ENCODE measurements at regions of chr6 and their contacts with region 1.

Region 1: DNA sequence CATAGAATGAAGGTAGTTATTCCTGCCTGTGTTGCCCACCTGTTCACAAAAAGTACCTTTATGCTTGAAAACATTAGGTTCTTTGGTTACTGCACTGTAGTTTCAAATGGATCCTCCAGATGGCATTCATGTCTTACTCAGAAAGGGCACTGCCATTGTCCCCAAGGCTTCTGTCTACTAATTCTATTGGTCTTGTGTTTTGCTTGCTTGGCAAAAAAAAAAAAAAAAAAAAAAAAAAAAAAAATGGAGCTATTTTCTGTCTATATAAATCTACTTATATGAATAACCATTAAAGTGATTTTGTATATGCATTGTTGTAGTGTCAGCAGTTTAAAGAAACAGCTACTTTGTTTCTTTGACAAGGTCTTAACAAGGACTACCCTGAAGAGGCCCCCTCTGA is 12.7 kb upstream of the EFHC1 start:
- DNase-seq: no peak
- H3K4me3 ChIP-seq: no peak overlapping the region
- H3K27ac ChIP-seq: no peak overlapping the region
- H3K27me3 ChIP-seq: no peaks in the 10 kb centered on the region
- CTCF ChIP-seq: peak; percentile 58

Region 2: DNA sequence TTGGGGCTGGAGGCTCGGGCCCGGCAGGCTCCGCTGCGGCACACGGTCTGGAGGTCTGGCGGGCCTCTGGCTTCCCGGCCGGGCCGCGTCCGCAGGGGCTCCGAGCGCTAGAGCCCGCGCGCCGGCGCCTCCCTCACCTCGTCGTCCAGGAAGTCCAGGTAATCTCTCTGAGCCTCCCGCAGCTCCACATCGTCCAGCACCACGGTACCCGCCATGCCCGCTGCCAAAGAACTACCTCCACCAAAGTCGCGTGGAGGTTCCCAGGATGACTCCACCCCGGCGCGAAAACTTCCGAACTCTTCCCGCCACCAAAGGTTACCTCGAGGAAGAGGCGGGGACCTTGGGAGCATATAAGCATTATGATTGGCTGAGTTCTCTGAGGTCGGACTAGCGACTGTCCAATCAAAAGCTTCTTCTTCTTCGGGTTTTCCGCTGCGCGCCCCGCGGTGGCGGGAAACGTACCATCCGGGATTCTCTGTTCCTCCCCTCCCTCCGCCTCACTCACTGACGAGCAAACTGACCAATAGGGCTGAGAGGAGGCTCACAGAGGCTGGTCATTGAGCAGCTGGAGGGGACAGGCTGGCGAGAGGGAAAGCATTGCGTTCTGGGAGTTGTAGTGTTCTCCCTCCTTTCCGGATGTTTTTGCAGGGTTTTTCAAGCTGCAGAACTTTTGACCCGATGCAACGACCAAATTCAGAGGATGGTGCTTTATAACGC is 122.8 kb before region 1 on chr6 and contains the start of gene MCM3:
- CTCF ChIA-PET with region 1: interaction called, 214 read pairs
- POLR2A ChIA-PET with region 1: no interaction called
- DNase-seq: peak; percentile 98
- H3K4me3 ChIP-seq: peak within 1 kb of the TSS; percentile 83
- H3K27ac ChIP-seq: no peak within 1 kb of the TSS
- H3K27me3 ChIP-seq: no peaks in the 10 kb centered on the region
- CTCF ChIP-seq: no peak
- polyA plus RNA-seq, gene MCM3: 28.4 and 33.6 TPM in 2 replicates

Region 3: GRCh38 chr6:52551401-52552277 is 144.2 kb after region 1 on chr6:
- CTCF ChIA-PET with region 1: interaction called, 10 read pairs
- POLR2A ChIA-PET with region 1: no interaction called
- DNase-seq: peak; percentile 87
- H3K4me3 ChIP-seq: peak overlapping the region; percentile 22; the same call in 1 of the 2 replicates
- H3K27ac ChIP-seq: peak overlapping the region; percentile 98
- H3K27me3 ChIP-seq: no peaks in the 10 kb centered on the region
- CTCF ChIP-seq: peak; percentile 5; the same call in 1 of the 2 replicates

Region 4: DNA sequence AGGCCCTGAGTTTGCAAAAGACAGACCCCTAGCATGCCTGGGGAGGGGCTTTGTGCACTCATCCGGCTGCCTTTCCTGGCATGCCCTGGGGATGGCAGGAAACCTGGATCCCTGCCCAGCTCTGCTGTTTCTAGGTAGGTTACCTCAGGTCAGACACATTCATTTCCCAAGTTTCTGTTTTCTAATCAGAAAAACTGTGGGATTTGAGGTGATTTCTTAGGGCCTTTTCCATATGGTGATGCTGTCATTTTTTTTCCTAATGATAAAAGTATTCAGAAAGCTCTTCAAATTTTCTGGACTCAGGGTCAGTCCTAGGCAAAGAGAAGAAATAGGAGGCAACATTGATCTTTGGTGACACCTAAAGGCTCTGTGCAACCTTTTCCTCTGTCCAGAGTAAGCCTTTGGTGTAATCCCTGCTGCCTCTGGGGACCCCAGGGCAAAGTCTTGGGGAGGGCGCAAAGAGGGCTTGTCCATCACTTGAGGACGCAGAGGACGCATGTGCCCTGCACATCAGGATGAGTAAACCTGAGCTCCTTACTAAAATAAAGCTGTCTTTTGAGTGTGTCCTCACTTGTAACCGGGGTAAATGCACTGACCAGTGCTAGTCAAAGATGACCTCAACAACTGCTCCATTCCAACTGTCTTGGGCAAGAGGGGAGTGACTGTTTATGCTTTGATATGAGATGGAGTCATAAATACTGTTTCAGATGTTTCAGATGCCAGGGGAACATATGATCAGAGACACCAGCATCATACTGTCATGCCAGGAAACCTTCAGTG is 182.9 kb after region 1 on chr6:
- CTCF ChIA-PET with region 1: interaction called, 21 read pairs
- POLR2A ChIA-PET with region 1: no interaction called
- DNase-seq: no peak
- H3K4me3 ChIP-seq: no peak overlapping the region
- H3K27ac ChIP-seq: peak overlapping the region; percentile 41
- H3K27me3 ChIP-seq: no peaks in the 10 kb centered on the region
- CTCF ChIP-seq: no peak

Region 5: GRCh38 chr6:52640170-52640569 is 232.7 kb after region 1 on chr6:
- CTCF ChIA-PET with region 1: interaction called, 10 read pairs
- POLR2A ChIA-PET with region 1: no interaction called
- DNase-seq: no peak
- H3K4me3 ChIP-seq: no peak overlapping the region
- H3K27ac ChIP-seq: no peak overlapping the region
- H3K27me3 ChIP-seq: no peaks in the 10 kb centered on the region
- CTCF ChIP-seq: no peak

Region 6: DNA sequence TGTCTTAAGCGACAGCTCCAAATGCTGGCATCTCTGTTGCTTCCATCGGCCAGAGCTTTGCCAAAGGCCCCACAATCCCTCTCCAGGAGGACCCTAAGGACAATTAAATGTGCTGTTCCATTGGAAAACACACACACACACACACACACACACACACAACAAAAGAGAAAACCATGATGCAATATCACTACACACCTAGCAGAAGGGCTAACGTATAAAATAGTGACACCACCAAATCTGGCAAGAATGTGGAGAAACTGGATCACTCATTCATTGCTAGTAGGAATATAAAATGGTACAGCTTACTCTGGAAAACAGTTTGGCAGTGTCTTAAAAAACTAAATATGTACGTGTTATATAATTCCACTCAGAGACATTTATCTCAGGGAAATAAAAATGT is 250.4 kb after region 1 on chr6:
- CTCF ChIA-PET with region 1: interaction called, 89 read pairs
- POLR2A ChIA-PET with region 1: no interaction called
- DNase-seq: no peak
- H3K4me3 ChIP-seq: no peak overlapping the region
- H3K27ac ChIP-seq: no peak overlapping the region
- H3K27me3 ChIP-seq: no peaks in the 10 kb centered on the region
- CTCF ChIP-seq: no peak